CD4-positive, alpha-beta memory T cell (primary cell): ENCODE measurements at regions of chr10 and their contacts with region 1.

Region 1: GRCh38 chr10:22436884-22437619 is 91.8 kb downstream of the SPAG6 start:
- DNase-seq: peak; percentile 89 to 90 (median 89)
- H3K4me3 ChIP-seq: peak overlapping the region; percentile 82 to 87
- H3K4me3 Mint-ChIP-seq: peak overlapping the region; percentile 92 to 97 (median 96)
- H3K27ac ChIP-seq: peak overlapping the region; percentile 90
- H3K27ac Mint-ChIP-seq: peak overlapping the region; percentile 96 to 99 (median 98)
- H3K4me1 ChIP-seq: peaks cover 15% of the 10 kb centered on the region
- H3K4me1 Mint-ChIP-seq: peaks cover 24 to 53% (median 28%) of the 10 kb centered on the region in 4 donors
- H3K27me3 ChIP-seq: no peaks in the 10 kb centered on the region
- H3K27me3 Mint-ChIP-seq: no peaks in the 10 kb centered on the region

Region 2: GRCh38 chr10:21495752-21496342 is 941.2 kb before region 1 on chr10:
- CTCF ChIA-PET with region 1: interaction called, 3 read pairs
- POLR2A ChIA-PET with region 1: interaction called, 5 read pairs
- intact Hi-C with region 1: loop called (anchors 10 kb)
- DNase-seq: peak; percentile 73 to 92 (median 86)
- H3K4me3 ChIP-seq: peak overlapping the region; percentile 17 to 66
- H3K4me3 Mint-ChIP-seq: peak overlapping the region; percentile 82 to 93 (median 90)
- H3K27ac ChIP-seq: no peak overlapping the region
- H3K27ac Mint-ChIP-seq: peak overlapping the region in 1 of 7 donors; percentile 67
- H3K4me1 ChIP-seq: peaks cover 34% of the 10 kb centered on the region
- H3K4me1 Mint-ChIP-seq: peaks cover 12 to 36% (median 17%) of the 10 kb centered on the region in 4 donors
- H3K27me3 ChIP-seq: peaks cover 60% of the 10 kb centered on the region
- H3K27me3 Mint-ChIP-seq: peaks cover 42 to 51% of the 10 kb centered on the region in 2 donors

Region 3: DNA sequence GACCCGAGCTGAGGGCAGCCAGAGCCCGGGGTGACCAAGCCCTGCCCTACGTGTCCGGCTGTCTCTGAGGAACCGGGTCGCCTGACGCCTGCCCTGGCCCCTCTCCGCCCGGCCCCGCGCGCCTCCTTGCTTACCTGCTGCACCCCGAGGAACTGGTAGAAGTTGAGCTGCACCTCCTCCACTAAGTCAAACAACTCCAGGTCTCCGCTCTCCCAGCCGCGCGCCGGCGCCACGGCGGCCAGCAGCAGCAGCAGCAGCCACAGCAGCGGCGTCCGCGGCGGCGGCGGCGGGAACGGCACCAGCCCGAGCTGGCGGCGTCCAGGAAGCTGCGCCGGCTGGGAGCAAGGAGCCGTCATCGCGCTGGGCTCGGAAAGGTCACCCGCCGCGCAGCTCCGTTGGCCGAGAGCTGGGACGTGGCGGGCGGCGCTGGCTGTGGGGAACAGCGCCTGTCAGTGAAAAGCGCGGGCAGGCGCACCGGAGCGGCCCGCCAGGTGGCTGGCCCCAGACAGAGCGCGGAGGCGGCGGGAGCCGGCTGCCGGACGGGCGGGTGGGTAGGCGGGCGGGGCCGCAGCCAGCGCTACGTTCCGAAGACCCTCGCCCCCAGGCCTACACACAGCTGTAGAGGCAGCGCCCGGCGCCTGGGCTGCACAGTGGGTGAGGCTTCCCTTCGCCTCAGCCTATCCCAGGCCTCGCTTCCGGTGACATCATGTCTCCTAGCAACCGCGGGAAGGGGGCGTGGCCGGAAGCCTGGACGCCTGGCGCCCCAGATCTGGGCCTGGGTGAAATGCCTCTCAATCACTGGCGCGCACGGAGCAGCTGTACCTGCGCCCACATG is 433.8 kb before region 1 on chr10 and contains the start of gene DNAJC1:
- CTCF ChIA-PET with region 1: no interaction called
- POLR2A ChIA-PET with region 1: interaction called, 57 read pairs
- intact Hi-C with region 1: loop called (anchors 1 kb)
- DNase-seq: peak; percentile 96 to 98 (median 96)
- H3K4me3 ChIP-seq: peak within 1 kb of the TSS; percentile 62 to 89
- H3K4me3 Mint-ChIP-seq: peak within 1 kb of the TSS; percentile 94 to 100 (median 98)
- H3K27ac ChIP-seq: peak within 1 kb of the TSS; percentile 84
- H3K27ac Mint-ChIP-seq: peak within 1 kb of the TSS; percentile 91 to 99 (median 97)
- H3K4me1 ChIP-seq: peaks cover 26% of the 10 kb centered on the region
- H3K4me1 Mint-ChIP-seq: peaks cover 23 to 45% (median 34%) of the 10 kb centered on the region in 4 donors
- H3K27me3 ChIP-seq: peaks cover 3% of the 10 kb centered on the region
- H3K27me3 Mint-ChIP-seq: peaks cover 0 to 4% of the 10 kb centered on the region in 2 donors
- total RNA-seq, gene DNAJC1: 15.0 to 16.7 TPM

Region 4: GRCh38 chr10:22259280-22259679 is 177.8 kb before region 1 on chr10:
- CTCF ChIA-PET with region 1: interaction called, 4 read pairs
- POLR2A ChIA-PET with region 1: interaction called, 52 read pairs
- intact Hi-C with region 1: no loop called
- DNase-seq: peak in 3 of 5 donors; percentile 15 to 26 (median 21)
- H3K4me3 ChIP-seq: no peak overlapping the region
- H3K4me3 Mint-ChIP-seq: no peak overlapping the region
- H3K27ac ChIP-seq: no peak overlapping the region
- H3K27ac Mint-ChIP-seq: peak overlapping the region in 2 of 7 donors; percentile 7 to 43
- H3K4me1 ChIP-seq: peaks cover 15% of the 10 kb centered on the region
- H3K4me1 Mint-ChIP-seq: peaks cover 6 to 33% (median 20%) of the 10 kb centered on the region in 4 donors
- H3K27me3 ChIP-seq: no peaks in the 10 kb centered on the region
- H3K27me3 Mint-ChIP-seq: peaks cover 0 to 3% of the 10 kb centered on the region in 2 donors

Region 5: DNA sequence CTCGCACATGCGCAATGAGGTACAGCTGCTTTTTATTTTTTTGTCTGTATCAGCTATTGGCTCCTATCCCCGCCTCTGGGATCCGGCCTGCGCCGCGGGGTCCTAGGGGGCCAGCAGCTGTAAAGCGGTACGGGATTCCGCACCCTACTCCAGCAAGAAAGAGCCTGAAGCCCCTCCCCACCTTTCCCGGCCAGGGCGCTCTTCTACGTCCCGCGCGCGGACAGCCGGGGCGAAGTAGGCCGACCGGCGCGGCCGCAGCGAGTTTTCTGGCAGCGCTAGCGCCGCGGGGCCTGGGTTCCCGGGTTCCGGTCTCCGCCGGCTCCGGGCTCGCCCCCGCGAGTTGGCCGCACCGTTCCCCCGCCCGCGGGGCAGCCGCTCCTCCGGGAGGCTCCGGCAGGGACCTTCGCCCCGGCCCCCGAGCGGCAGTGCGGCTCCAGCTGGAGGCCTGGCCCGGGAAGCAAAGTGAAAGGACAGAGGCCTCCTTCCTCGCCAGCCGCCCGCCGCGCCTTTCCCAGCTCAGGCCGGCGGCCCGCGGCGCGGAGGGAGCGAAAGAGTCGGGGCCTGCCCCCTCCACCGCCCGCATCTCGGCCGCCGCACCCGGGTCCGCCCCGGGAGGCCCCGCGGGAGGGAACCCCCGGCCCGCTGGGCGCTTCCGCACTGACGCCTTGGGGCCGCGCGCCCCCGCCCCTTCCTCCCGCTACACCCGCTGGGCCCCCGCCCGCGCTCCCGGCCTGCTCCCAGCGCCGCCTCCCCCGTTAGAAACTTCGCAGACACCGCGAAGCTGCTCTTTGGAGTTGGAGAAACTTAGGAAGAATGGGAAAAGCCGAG is 96.5 kb before region 1 on chr10:
- CTCF ChIA-PET with region 1: interaction called, 3 read pairs
- POLR2A ChIA-PET with region 1: no interaction called
- intact Hi-C with region 1: loop called (anchors 5 kb)
- DNase-seq: peak; percentile 70 to 77 (median 74)
- H3K4me3 ChIP-seq: peak overlapping the region in 1 of 2 donors; percentile 52
- H3K4me3 Mint-ChIP-seq: peak overlapping the region; percentile 87 to 97 (median 90)
- H3K27ac ChIP-seq: peak overlapping the region; percentile 40
- H3K27ac Mint-ChIP-seq: peak overlapping the region; percentile 86 to 97 (median 93)
- H3K4me1 ChIP-seq: peaks cover 30% of the 10 kb centered on the region
- H3K4me1 Mint-ChIP-seq: peaks cover 9 to 45% (median 23%) of the 10 kb centered on the region in 4 donors
- H3K27me3 ChIP-seq: peaks cover 90% of the 10 kb centered on the region
- H3K27me3 Mint-ChIP-seq: peaks cover 45 to 61% of the 10 kb centered on the region in 2 donors

Region 6: GRCh38 chr10:22503315-22504076 is 66.4 kb after region 1 on chr10:
- CTCF ChIA-PET with region 1: no interaction called
- POLR2A ChIA-PET with region 1: no interaction called
- intact Hi-C with region 1: no loop called
- DNase-seq: no peak
- H3K4me3 ChIP-seq: no peak overlapping the region
- H3K4me3 Mint-ChIP-seq: no peak overlapping the region
- H3K27ac ChIP-seq: no peak overlapping the region
- H3K27ac Mint-ChIP-seq: peak overlapping the region in 1 of 7 donors; percentile 4
- H3K4me1 ChIP-seq: peaks cover 7% of the 10 kb centered on the region
- H3K4me1 Mint-ChIP-seq: peaks cover 8 to 18% (median 13%) of the 10 kb centered on the region in 4 donors
- H3K27me3 ChIP-seq: no peaks in the 10 kb centered on the region
- H3K27me3 Mint-ChIP-seq: peaks cover 4 to 8% of the 10 kb centered on the region in 2 donors

Region 7: GRCh38 chr10:22573820-22574569 is 136.9 kb after region 1 on chr10:
- CTCF ChIA-PET with region 1: no interaction called
- POLR2A ChIA-PET with region 1: no interaction called
- intact Hi-C with region 1: no loop called
- DNase-seq: peak; percentile 17 to 40 (median 21)
- H3K4me3 ChIP-seq: no peak overlapping the region
- H3K4me3 Mint-ChIP-seq: peak overlapping the region in 3 of 8 donors; percentile 9 to 77 (median 31)
- H3K27ac ChIP-seq: no peak overlapping the region
- H3K27ac Mint-ChIP-seq: peak overlapping the region; percentile 27 to 78 (median 72)
- H3K4me1 ChIP-seq: peaks cover 37% of the 10 kb centered on the region
- H3K4me1 Mint-ChIP-seq: peaks cover 39 to 77% (median 58%) of the 10 kb centered on the region in 4 donors
- H3K27me3 ChIP-seq: no peaks in the 10 kb centered on the region
- H3K27me3 Mint-ChIP-seq: no peaks in the 10 kb centered on the region

Region 8: GRCh38 chr10:22615819-22616499 is 178.9 kb after region 1 on chr10:
- CTCF ChIA-PET with region 1: no interaction called
- POLR2A ChIA-PET with region 1: interaction called, 12 read pairs
- intact Hi-C with region 1: no loop called
- DNase-seq: peak in 4 of 5 donors; percentile 32 to 81 (median 44)
- H3K4me3 ChIP-seq: peak overlapping the region; percentile 2 to 6
- H3K4me3 Mint-ChIP-seq: peak overlapping the region; percentile 53 to 85 (median 75)
- H3K27ac ChIP-seq: peak overlapping the region; percentile 53
- H3K27ac Mint-ChIP-seq: peak overlapping the region; percentile 87 to 98 (median 95)
- H3K4me1 ChIP-seq: peaks cover 97% of the 10 kb centered on the region
- H3K4me1 Mint-ChIP-seq: peaks cover 78 to 100% (median 91%) of the 10 kb centered on the region in 4 donors
- H3K27me3 ChIP-seq: no peaks in the 10 kb centered on the region
- H3K27me3 Mint-ChIP-seq: no peaks in the 10 kb centered on the region

Region 9: DNA sequence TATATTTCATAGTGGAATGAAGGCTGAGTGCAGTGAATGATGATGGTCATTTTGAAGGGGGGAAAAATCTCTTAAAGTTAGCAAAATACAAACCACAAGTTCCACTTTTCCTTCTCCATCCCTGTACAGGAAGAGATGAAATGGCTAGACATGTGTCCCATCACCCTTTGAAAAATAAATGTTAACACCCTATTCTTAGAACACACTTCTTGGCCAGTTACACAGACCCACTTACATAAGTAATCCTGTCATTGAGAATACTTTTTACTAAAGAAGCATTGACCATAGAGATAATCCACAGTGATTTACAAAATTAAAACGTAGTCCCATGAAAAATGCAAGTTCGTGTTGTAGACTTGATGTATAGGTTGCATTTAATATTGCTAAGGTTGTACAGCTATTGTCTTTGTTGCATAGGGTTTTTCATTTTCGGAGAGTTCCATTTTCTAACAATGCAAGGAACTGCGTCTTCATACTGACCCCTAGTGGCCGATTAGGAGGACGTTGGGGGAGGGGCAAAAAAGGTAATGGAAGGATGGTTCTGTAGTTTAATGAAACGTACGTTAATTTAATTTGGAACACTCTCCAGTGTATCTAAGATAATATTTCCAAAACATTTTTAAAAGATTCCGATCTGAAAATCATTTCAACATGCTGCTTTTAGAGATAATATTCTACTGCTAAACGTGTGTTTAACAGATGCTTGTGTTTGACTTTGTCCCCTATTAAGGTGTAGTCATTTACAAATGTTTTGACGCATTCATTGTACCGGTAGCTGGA is 551.7 kb after region 1 on chr10:
- CTCF ChIA-PET with region 1: interaction called, 3 read pairs
- POLR2A ChIA-PET with region 1: interaction called, 12 read pairs
- intact Hi-C with region 1: loop called (anchors 5 kb)
- DNase-seq: peak; percentile 71 to 79 (median 77)
- H3K4me3 ChIP-seq: no peak overlapping the region
- H3K4me3 Mint-ChIP-seq: no peak overlapping the region
- H3K27ac ChIP-seq: no peak overlapping the region
- H3K27ac Mint-ChIP-seq: peak overlapping the region in 3 of 7 donors; percentile 6 to 68 (median 43)
- H3K4me1 ChIP-seq: peaks cover 13% of the 10 kb centered on the region
- H3K4me1 Mint-ChIP-seq: peaks cover 4 to 10% (median 9%) of the 10 kb centered on the region in 4 donors
- H3K27me3 ChIP-seq: no peaks in the 10 kb centered on the region
- H3K27me3 Mint-ChIP-seq: peaks cover 4 to 5% of the 10 kb centered on the region in 2 donors